Endothelial cell of umbilical vein (primary cell): ENCODE measurements at regions of chr7 and their contacts with region 1.

Region 1: DNA sequence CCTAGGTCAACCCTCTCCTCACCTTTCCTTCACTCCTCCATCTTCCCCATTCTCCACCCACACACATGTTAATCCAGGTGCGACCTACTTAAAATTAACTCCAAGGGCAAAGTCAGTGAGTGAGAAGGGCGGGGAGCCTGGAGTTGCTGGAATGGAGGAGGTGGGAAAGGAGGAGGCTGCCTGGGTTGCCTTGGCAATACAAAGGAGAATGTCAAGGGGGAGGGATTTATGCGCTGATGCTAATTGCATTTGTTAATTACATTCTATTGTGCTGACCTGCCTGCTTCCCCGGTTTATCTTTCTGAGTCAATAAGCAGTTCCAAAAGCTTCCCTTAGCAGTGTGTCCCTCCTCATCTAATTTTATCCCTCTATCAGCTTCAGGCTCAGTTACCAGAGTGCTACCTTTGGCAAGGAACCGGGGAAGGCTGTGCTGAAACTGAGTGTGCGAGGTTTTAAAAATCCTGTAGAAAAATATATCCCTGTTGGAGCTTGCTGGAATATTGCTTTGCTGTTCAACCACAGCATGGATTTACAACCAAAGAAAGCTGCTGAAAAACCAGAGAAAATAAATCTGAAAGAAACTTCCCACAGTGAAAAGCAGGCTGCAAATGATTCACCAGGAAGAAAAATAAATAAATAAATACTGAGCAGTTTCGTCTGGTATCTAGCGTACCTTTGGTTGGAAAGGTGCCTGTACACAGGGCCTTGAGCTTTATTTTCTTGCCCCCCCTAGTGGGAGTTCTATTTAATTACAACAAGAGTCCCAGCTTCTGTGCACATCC is 113.2 kb upstream of the DGKB start:
- DNase-seq: peak; percentile 77
- H3K4me3 ChIP-seq: peak overlapping the region in 1 of 3 experiments; percentile 52
- H3K27ac ChIP-seq: no peak overlapping the region
- H3K4me1 ChIP-seq: peaks cover 4% of the 10 kb centered on the region
- H3K27me3 ChIP-seq: no peaks in the 10 kb centered on the region
- CTCF ChIP-seq: peak; percentile 44 to 53
- POLR2A ChIP-seq: no peak

Region 2: GRCh38 chr7:14137676-14138075 is 878.1 kb before region 1 on chr7:
- CTCF ChIA-PET with region 1: no interaction called
- POLR2A ChIA-PET with region 1: no interaction called
- dilution Hi-C with region 1: no loop called
- intact Hi-C with region 1: no loop called
- DNase-seq: no peak
- H3K4me3 ChIP-seq: no peak overlapping the region
- H3K27ac ChIP-seq: no peak overlapping the region
- H3K4me1 ChIP-seq: no peaks in the 10 kb centered on the region
- H3K27me3 ChIP-seq: no peaks in the 10 kb centered on the region
- CTCF ChIP-seq: no peak
- POLR2A ChIP-seq: no peak

Region 3: GRCh38 chr7:14691597-14692203 is 324.0 kb before region 1 on chr7:
- CTCF ChIA-PET with region 1: interaction called, 14 read pairs
- POLR2A ChIA-PET with region 1: no interaction called
- dilution Hi-C with region 1: no loop called
- intact Hi-C with region 1: no loop called
- DNase-seq: peak; percentile 42
- H3K4me3 ChIP-seq: no peak overlapping the region
- H3K27ac ChIP-seq: no peak overlapping the region
- H3K4me1 ChIP-seq: peaks cover 8% of the 10 kb centered on the region
- H3K27me3 ChIP-seq: no peaks in the 10 kb centered on the region
- CTCF ChIP-seq: peak; percentile 61 to 72
- POLR2A ChIP-seq: no peak

Region 4: DNA sequence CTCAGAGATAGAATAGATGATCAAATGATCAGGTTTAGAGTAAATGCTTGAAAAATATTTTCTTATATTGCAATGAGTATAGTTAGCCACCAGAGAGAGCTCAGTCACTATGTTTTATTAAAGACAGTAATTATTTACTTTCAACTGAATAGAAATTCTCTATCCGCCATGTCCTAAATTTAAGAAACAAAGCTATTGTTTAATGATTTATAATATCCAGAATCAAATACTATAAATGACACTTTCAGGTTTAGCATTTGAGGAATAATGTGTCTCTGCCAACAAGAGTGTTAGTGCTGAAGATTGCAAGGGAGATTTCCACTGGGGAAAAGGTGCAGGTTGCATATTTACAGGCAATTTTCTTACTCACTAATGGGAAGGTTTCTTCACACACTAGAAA is 297.9 kb before region 1 on chr7:
- CTCF ChIA-PET with region 1: interaction called, 357 read pairs
- POLR2A ChIA-PET with region 1: no interaction called
- dilution Hi-C with region 1: no loop called
- intact Hi-C with region 1: loop called (anchors 1 kb)
- DNase-seq: peak; percentile 48
- H3K4me3 ChIP-seq: no peak overlapping the region
- H3K27ac ChIP-seq: no peak overlapping the region
- H3K4me1 ChIP-seq: peaks cover 7% of the 10 kb centered on the region
- H3K27me3 ChIP-seq: no peaks in the 10 kb centered on the region
- CTCF ChIP-seq: peak; percentile 21 to 30
- POLR2A ChIP-seq: no peak

Region 5: GRCh38 chr7:14995774-14996173 is 20.0 kb before region 1 on chr7:
- CTCF ChIA-PET with region 1: interaction called, 10 read pairs
- POLR2A ChIA-PET with region 1: no interaction called
- dilution Hi-C with region 1: no loop called
- intact Hi-C with region 1: no loop called
- DNase-seq: no peak
- H3K4me3 ChIP-seq: no peak overlapping the region
- H3K27ac ChIP-seq: no peak overlapping the region
- H3K4me1 ChIP-seq: no peaks in the 10 kb centered on the region
- H3K27me3 ChIP-seq: no peaks in the 10 kb centered on the region
- CTCF ChIP-seq: no peak
- POLR2A ChIP-seq: no peak

Region 6: GRCh38 chr7:15043931-15044330 is 28.2 kb after region 1 on chr7:
- CTCF ChIA-PET with region 1: interaction called, 11 read pairs
- POLR2A ChIA-PET with region 1: no interaction called
- dilution Hi-C with region 1: no loop called
- intact Hi-C with region 1: no loop called
- DNase-seq: no peak
- H3K4me3 ChIP-seq: no peak overlapping the region
- H3K27ac ChIP-seq: no peak overlapping the region
- H3K4me1 ChIP-seq: peaks cover 24% of the 10 kb centered on the region
- H3K27me3 ChIP-seq: no peaks in the 10 kb centered on the region
- CTCF ChIP-seq: no peak
- POLR2A ChIP-seq: no peak

Region 7: DNA sequence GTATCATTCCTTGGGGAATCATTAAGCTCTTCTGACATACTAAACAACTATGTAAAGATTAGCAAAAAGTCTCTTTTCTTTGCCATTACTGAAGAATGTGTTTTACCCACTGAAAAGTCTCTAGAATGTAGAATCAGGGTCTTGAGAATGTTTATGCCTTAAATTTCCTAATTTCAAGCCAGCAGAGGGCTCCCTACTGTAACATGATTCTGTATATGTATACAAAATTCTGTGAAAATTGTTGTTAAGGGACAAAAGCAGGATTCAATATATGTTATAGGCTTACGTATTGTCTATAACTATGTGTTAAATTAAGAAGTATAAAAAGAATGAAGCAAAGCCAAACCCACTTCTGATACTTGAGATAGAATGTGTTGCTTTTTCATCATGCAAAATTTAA is 183.7 kb after region 1 on chr7:
- CTCF ChIA-PET with region 1: interaction called, 12 read pairs
- POLR2A ChIA-PET with region 1: no interaction called
- dilution Hi-C with region 1: no loop called
- intact Hi-C with region 1: no loop called
- DNase-seq: peak; percentile 51
- H3K4me3 ChIP-seq: no peak overlapping the region
- H3K27ac ChIP-seq: no peak overlapping the region
- H3K4me1 ChIP-seq: no peaks in the 10 kb centered on the region
- H3K27me3 ChIP-seq: no peaks in the 10 kb centered on the region
- CTCF ChIP-seq: peak; percentile 15 to 16
- POLR2A ChIP-seq: no peak